Left colon (tissue), 2 donors: ENCODE measurements at regions of chr14 and their contacts with region 1.

Region 1: DNA sequence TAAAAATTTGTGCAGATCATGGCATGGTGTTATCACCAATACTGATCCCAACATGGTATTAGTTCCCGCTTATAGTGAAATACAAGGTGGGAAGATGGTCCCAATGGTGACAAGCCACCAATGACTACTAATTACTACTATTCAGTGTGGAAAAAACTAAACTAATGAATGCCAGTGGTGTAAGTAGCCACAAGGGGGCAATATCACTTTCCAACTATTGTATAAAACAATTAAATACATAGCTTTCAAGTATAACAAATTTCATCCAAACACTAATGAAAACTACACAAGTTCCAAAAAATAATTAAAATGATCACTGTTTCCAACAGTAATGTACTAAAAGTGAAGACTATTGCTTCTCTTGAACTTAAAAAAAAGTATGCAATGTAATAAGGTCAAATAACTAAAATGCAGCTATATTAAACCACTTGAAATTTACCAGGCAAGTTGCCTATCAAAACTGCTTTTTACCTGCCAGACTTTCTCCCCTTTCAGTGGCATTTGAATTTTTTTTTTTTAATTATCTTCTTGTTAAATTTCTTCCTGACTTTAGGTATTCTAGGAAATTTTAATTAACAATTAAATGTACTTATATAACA is 58.0 kb downstream of the PAPLN start:
- DNase-seq: no peak
- ATAC-seq: peak; percentile 39

Region 2: GRCh38 chr14:73397810-73398209 is 102.5 kb after region 1 on chr14:
- intact Hi-C with region 1: no loop called
- DNase-seq: no peak
- ATAC-seq: no peak

Region 3: DNA sequence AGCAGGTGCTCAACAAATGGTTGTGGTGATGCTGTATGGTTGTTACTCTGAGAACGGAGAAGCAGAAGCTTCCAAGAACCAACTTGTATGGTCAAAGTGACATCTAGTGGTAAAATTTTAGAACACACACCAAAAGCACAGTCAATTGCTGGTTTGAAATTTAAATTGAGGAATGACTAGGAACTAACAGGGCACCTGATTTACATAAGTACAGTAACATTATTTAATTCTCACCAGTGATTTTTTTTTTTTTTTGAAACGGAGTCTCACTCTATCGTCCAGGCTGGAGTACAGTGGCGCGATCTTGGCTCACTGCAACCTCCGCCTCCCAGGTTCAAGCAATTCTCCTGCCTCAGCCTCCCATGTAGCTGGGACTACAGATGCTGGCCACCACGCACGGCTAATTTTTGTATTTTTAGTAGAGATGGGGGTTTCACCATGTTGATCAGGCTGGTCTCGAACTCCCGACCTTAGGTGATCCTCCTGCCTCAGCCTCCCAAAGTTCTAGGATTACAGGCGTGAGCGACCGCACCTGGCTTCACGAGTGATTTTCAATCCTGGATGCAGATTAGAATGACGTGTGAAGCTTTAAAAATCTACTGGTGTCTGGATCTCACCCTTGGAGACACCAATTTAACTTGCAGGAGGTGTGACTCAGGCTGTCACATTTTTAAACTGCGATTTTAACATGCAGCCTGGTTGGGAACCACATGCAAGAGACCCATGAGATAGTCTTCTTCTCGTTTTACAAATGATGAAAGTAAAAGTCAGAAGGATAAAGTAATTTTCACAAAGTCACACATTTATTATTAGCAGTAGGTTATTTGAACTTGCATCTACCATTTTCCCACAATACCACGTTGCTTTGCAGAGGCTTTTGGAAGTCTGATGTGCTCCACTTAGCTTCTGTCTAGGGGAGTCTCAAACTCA is 177.2 kb after region 1 on chr14:
- intact Hi-C with region 1: loop called in 1 of 2 experiments (anchors 5 kb)
- DNase-seq: no peak
- ATAC-seq: peak; percentile 82

Region 4: GRCh38 chr14:74085047-74085637 is 789.8 kb after region 1 on chr14:
- intact Hi-C with region 1: no loop called
- DNase-seq: peak in 1 of 2 donors; percentile 11
- ATAC-seq: peak; percentile 15